IMR-90 (cell line): ENCODE measurements at regions of chr1 and their contacts with region 1.

Region 1: GRCh38 chr1:183023601-183024316 is 539 bp downstream of the LAMC1 start:
- DNase-seq: peak; percentile 47
- ATAC-seq: peak; percentile 31
- H3K4me3 ChIP-seq: peak overlapping the region; percentile 84
- H3K27ac ChIP-seq: peak overlapping the region; percentile 56
- H3K4me1 ChIP-seq: peaks cover 4% of the 10 kb centered on the region
- H3K27me3 ChIP-seq: no peaks in the 10 kb centered on the region
- CTCF ChIP-seq: peak; percentile 40
- POLR2A ChIP-seq: no peak; the same call in 1 of the 2 replicates
- RAD21 ChIP-seq: peak; percentile 40

Region 2: DNA sequence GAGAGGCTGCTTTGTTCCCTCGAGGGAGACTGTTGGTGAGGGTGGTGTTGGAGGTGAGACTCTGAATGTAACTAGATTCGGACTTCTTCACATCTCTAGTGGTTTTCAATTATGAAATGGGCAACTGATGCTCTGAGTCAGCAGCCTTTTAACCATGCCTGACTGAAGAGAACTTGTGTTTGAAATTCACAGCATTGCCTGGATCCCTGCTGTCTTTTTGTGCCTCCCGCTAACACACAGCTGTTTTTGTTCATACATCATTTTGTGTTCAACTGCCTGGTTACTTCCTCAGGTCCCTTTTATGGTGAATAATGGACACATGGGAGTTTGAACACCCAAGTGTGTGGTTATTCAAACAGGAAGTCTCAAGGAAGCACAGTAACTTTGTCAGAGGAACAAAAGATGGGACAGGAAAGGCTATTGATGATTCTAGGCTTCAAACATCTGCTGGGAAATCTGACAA is 16.3 kb after region 1 on chr1:
- CTCF ChIA-PET with region 1: no interaction called
- POLR2A ChIA-PET with region 1: no interaction called
- dilution Hi-C with region 1: no loop called
- in situ Hi-C with region 1: no loop called
- intact Hi-C with region 1: no loop called
- DNase-seq: peak; percentile 88
- ATAC-seq: peak; percentile 50
- H3K4me3 ChIP-seq: no peak overlapping the region
- H3K27ac ChIP-seq: no peak overlapping the region
- H3K4me1 ChIP-seq: peaks cover 26% of the 10 kb centered on the region
- H3K27me3 ChIP-seq: no peaks in the 10 kb centered on the region
- CTCF ChIP-seq: no peak
- POLR2A ChIP-seq: no peak
- RAD21 ChIP-seq: 0 out of 2 replicates have a peak, but pooled peaks have one; percentile 13

Region 3: GRCh38 chr1:183061194-183061593 is 37.4 kb after region 1 on chr1:
- CTCF ChIA-PET with region 1: interaction called, 3 read pairs
- POLR2A ChIA-PET with region 1: no interaction called
- dilution Hi-C with region 1: no loop called
- in situ Hi-C with region 1: no loop called
- intact Hi-C with region 1: loop called (anchors 2 kb)
- DNase-seq: no peak
- ATAC-seq: no peak
- H3K4me3 ChIP-seq: no peak overlapping the region
- H3K27ac ChIP-seq: no peak overlapping the region
- H3K4me1 ChIP-seq: peaks cover 16% of the 10 kb centered on the region
- H3K27me3 ChIP-seq: no peaks in the 10 kb centered on the region
- CTCF ChIP-seq: no peak
- POLR2A ChIP-seq: no peak
- RAD21 ChIP-seq: no peak

Region 4: DNA sequence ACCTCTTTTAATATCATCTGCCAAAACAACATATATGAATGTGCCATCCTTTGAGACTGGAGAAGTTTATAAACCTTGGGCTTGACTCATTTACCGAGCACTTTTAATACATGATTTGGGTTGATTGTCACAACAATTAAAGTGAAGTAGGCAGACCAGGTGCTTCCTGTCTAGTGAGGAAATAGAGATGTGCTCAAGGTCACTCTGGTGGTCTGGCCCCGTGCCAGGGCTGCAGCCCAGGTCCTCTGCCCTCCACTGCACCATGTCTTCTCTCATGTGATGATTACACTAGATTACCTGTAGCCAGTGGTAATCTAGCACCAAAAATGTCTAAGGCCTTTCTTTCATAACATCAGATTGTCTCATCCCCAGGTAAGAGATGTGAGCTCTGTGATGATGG is 100.5 kb after region 1 on chr1:
- CTCF ChIA-PET with region 1: no interaction called
- POLR2A ChIA-PET with region 1: interaction called, 3 read pairs
- dilution Hi-C with region 1: no loop called
- in situ Hi-C with region 1: no loop called
- intact Hi-C with region 1: loop called (anchors 1 kb)
- DNase-seq: no peak
- ATAC-seq: no peak
- H3K4me3 ChIP-seq: no peak overlapping the region
- H3K27ac ChIP-seq: no peak overlapping the region
- H3K4me1 ChIP-seq: peaks cover 10% of the 10 kb centered on the region
- H3K27me3 ChIP-seq: no peaks in the 10 kb centered on the region
- CTCF ChIP-seq: no peak
- POLR2A ChIP-seq: no peak
- RAD21 ChIP-seq: no peak

Region 5: GRCh38 chr1:183281553-183282091 is 257.9 kb after region 1 on chr1:
- CTCF ChIA-PET with region 1: interaction called, 3 read pairs
- POLR2A ChIA-PET with region 1: no interaction called
- dilution Hi-C with region 1: no loop called
- in situ Hi-C with region 1: no loop called
- intact Hi-C with region 1: loop called (anchors 2 kb)
- DNase-seq: peak; percentile 93
- ATAC-seq: peak; percentile 85
- H3K4me3 ChIP-seq: no peak overlapping the region
- H3K27ac ChIP-seq: no peak overlapping the region
- H3K4me1 ChIP-seq: peaks cover 26% of the 10 kb centered on the region
- H3K27me3 ChIP-seq: no peaks in the 10 kb centered on the region
- CTCF ChIP-seq: peak; percentile 94
- POLR2A ChIP-seq: no peak
- RAD21 ChIP-seq: peak; percentile 89

Region 6: DNA sequence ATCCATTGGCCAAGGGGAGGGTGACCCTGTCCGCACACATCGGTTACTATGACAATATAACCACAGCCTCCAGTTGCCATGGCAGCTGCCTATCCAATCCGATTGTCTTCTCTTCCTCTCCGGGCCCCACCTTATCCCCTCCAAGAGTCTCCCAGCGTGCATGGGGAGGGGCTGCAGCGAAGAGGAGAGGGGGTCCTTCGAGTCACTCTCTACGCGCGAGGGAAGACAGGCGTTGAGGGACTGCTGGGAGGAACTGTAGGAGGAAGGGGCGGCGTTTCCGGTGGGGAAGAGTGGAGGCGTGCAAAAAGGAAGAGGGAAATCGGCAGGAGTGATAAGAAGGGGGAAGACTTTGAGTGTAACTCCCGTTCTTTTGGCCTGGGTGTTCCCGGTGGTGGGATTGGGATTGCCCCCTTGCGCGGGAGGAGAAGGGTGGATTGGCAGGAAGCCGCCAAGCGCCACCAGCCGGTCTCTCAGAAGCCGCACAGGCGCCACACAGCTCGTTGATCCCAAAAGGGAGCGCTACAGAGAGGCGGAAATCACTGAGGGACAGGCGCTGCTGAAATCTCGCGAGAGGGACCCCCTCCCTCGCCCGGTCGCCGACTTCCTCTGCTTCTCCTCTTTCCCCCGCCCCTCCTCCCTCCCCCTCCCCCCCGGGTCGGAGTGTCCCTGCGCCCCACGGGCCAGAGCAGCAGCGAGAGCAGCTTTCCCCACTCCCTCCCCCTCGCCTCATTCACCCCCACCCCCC is 448.2 kb after region 1 on chr1:
- CTCF ChIA-PET with region 1: no interaction called
- POLR2A ChIA-PET with region 1: no interaction called
- dilution Hi-C with region 1: no loop called
- in situ Hi-C with region 1: no loop called
- intact Hi-C with region 1: loop called (anchors 5 kb)
- DNase-seq: peak; percentile 98
- ATAC-seq: peak; percentile 84
- H3K4me3 ChIP-seq: peak overlapping the region; percentile 99
- H3K27ac ChIP-seq: peak overlapping the region; percentile 98
- H3K4me1 ChIP-seq: peaks cover 2% of the 10 kb centered on the region; the same call in 1 of the 2 replicates
- H3K27me3 ChIP-seq: peaks cover under 1% of the 10 kb centered on the region; the same call in 1 of the 2 replicates
- CTCF ChIP-seq: no peak
- POLR2A ChIP-seq: no peak
- RAD21 ChIP-seq: no peak